ENCODE measurements at regions of chr21 and their contacts with region 1.

Region 1: GRCh38 chr21:17679002-17679600 is 66.4 kb upstream of the BTG3 start:
- DNase-seq: peak; percentile 24
- H3K4me3 Mint-ChIP-seq: no peak overlapping the region
- H3K27ac Mint-ChIP-seq: no peak overlapping the region
- H3K4me1 Mint-ChIP-seq: no peaks in the 10 kb centered on the region
- H3K27me3 Mint-ChIP-seq: peaks cover 2% of the 10 kb centered on the region

Region 2: DNA sequence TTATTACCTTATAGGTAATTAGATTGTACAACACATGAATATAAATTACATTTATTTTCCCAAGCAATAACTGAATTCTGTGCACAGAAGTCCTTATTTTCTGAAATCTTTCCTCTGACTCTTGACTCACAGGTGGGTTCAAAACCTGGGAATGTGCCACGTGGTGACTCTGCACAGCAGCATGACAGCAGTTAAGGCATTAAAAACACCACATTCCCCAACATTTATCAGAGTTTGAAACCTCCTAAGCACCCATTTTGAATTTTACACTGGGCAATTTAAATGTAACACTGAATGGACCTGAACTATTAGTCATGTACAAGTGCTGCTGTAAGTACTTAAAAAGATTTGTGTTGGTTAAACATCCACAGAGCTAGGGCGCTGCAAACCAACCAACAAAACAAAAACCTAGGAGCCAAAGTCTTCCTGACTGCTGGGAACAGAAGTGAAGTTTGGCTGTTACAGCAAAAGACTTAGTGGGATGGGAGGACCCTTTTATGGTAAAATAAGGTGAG is 646.9 kb before region 1 on chr21:
- intact Hi-C with region 1: no loop called
- DNase-seq: no peak
- H3K4me3 Mint-ChIP-seq: no peak overlapping the region
- H3K27ac Mint-ChIP-seq: no peak overlapping the region
- H3K4me1 Mint-ChIP-seq: no peaks in the 10 kb centered on the region
- H3K27me3 Mint-ChIP-seq: no peaks in the 10 kb centered on the region

Region 3: GRCh38 chr21:17343055-17343454 is 336.0 kb before region 1 on chr21:
- intact Hi-C with region 1: no loop called
- DNase-seq: no peak
- H3K4me3 Mint-ChIP-seq: no peak overlapping the region
- H3K27ac Mint-ChIP-seq: no peak overlapping the region
- H3K4me1 Mint-ChIP-seq: no peaks in the 10 kb centered on the region
- H3K27me3 Mint-ChIP-seq: no peaks in the 10 kb centered on the region

Region 4: GRCh38 chr21:17611414-17612022 is 67.6 kb before region 1 on chr21:
- intact Hi-C with region 1: loop called (anchors 5 kb)
- DNase-seq: peak; percentile 76
- H3K4me3 Mint-ChIP-seq: peak overlapping the region; percentile 88
- H3K27ac Mint-ChIP-seq: peak overlapping the region; percentile 97
- H3K4me1 Mint-ChIP-seq: peaks cover 58% of the 10 kb centered on the region
- H3K27me3 Mint-ChIP-seq: no peaks in the 10 kb centered on the region

Region 5: DNA sequence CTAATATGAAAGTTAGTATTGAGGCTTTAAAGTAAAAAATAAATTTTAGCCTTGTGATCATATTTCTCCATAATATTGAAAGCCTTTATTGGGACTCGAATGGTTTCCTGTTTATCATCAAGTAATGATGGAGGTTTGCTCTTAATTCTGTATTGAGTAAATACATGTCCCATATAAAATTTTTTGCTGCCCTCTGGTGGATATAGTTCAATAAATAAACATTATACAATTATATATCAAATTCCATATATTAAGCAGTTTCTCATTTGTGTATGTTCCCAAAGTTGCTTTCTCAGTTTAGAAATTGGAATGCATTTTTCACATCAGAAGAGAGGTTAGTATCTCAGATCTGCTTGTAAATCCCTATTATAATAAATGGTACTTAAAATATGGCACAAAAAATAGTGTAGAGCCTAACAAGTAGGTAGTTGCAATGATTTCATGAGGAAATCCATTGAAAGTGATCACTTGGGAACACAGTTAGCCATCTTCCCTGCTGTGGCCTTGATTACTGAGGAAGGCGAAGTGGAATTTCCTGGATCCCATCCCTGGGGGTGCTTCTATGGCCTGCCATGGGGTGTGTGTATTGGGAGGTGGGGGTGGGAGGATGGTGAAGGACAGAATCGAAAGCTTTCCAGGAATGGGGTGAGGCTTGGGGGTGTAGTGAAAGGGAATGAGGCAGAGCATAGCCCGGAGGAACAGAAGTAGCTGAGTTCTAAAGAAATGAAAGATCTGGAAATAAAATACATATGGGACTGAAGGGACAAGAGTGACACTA is 224.1 kb after region 1 on chr21:
- intact Hi-C with region 1: loop called (anchors 1 kb)
- DNase-seq: no peak
- H3K4me3 Mint-ChIP-seq: no peak overlapping the region
- H3K27ac Mint-ChIP-seq: no peak overlapping the region
- H3K4me1 Mint-ChIP-seq: peaks cover 8% of the 10 kb centered on the region
- H3K27me3 Mint-ChIP-seq: peaks cover 1% of the 10 kb centered on the region

Region 6: DNA sequence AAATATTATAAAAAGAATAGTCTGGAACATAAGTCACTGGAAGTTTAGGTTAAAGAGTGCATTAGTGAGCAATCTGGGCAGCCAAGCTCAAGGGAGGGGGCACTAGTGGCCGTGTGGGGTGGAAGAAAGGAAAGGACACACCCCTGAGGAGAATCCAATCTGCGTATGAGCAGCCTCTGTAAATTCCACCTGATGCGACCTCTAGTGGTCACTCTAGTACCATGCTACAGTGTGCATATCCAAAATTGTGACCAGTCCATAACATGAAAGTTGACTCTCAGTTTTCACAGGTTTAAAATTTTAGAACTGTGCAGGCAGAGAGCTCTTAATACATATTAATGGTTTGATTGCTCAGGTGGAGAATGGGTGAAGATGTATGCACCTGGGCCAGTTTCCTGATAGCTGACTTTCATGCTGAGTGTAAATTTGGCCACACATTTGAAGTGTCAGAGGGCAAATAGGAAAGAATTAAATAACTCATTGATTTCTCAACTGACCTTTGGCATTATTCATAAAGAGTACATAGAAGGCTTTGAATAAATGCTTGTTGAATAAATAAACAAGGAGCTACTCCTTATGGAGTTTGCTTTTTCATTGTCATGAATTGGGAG is 246.0 kb after region 1 on chr21:
- intact Hi-C with region 1: loop called (anchors 1 kb)
- DNase-seq: peak; percentile 14
- H3K4me3 Mint-ChIP-seq: no peak overlapping the region
- H3K27ac Mint-ChIP-seq: no peak overlapping the region
- H3K4me1 Mint-ChIP-seq: no peaks in the 10 kb centered on the region
- H3K27me3 Mint-ChIP-seq: peaks cover 7% of the 10 kb centered on the region

Region 7: DNA sequence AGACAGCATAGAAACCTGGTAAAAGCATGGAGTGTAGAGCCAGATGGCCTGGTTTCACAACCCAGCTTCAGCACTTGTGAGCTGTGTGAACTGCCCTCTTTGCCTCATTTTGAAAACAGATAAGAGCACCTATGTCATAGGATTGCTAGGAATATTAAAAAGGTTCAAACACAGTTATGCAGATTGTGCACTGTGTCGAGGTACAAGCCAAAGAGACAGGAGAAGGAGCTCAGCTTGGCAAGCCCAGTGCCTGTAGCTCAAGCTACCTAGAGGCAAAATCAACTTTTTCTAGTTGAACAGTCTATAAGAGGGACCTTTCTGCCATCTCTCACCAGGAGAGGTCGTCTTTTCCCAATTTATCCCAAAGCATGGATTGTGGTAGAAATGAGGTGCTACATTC is 570.6 kb after region 1 on chr21:
- intact Hi-C with region 1: loop called (anchors 5 kb)
- DNase-seq: no peak
- H3K4me3 Mint-ChIP-seq: no peak overlapping the region
- H3K27ac Mint-ChIP-seq: no peak overlapping the region
- H3K4me1 Mint-ChIP-seq: no peaks in the 10 kb centered on the region
- H3K27me3 Mint-ChIP-seq: peaks cover 6% of the 10 kb centered on the region